Activated CD4-positive, alpha-beta T cell treated with anti-CD3 and anti-CD28 coated beads for 36 hours (primary cell): ENCODE measurements at regions of chr3 and their contacts with region 1.

Region 1: DNA sequence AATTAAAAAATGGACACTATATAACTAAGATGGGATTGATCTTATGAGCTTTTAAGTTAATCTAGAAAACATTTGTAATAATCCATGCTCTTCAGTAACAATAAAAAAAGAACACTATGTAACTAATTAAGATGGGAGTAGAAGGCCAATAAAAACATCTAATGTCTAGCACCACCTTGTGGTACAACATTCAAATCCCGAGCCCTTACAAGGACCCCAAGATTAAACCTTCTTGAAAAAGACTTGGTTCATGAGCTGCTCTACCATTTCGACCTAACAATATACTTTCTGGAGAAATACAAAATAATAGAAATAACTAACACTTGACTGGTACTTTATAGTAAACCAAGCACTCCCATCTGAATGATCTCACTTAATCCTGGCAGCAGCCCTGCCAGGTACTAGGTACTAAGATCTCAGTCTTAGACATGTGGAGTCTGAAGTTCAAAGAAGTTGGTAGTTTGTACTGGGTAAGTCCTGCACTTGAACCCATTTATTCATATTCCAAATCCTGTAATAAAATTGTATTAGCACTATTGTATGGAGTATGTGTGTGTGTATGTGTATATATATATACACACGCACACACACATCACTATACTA is 21.8 kb downstream of the METTL6 start:
- DNase-seq: no peak
- ATAC-seq: peak; percentile 72
- H3K4me3 Mint-ChIP-seq: no peak overlapping the region
- H3K27ac Mint-ChIP-seq: no peak overlapping the region
- H3K4me1 Mint-ChIP-seq: no peaks in the 10 kb centered on the region
- H3K27me3 Mint-ChIP-seq: no peaks in the 10 kb centered on the region

Region 2: GRCh38 chr3:14791343-14791945 is 614.1 kb before region 1 on chr3:
- CTCF ChIA-PET with region 1: no interaction called
- POLR2A ChIA-PET with region 1: no interaction called
- intact Hi-C with region 1: no loop called
- DNase-seq: peak; percentile 78
- ATAC-seq: peak; percentile 78
- H3K4me3 Mint-ChIP-seq: no peak overlapping the region
- H3K27ac Mint-ChIP-seq: no peak overlapping the region
- H3K4me1 Mint-ChIP-seq: no peaks in the 10 kb centered on the region
- H3K27me3 Mint-ChIP-seq: peaks cover 8% of the 10 kb centered on the region

Region 3: GRCh38 chr3:14969671-14970070 is 435.9 kb before region 1 on chr3:
- CTCF ChIA-PET with region 1: no interaction called
- POLR2A ChIA-PET with region 1: no interaction called
- intact Hi-C with region 1: no loop called
- DNase-seq: no peak
- ATAC-seq: no peak
- H3K4me3 Mint-ChIP-seq: no peak overlapping the region
- H3K27ac Mint-ChIP-seq: no peak overlapping the region
- H3K4me1 Mint-ChIP-seq: peaks cover 3% of the 10 kb centered on the region
- H3K27me3 Mint-ChIP-seq: no peaks in the 10 kb centered on the region

Region 4: GRCh38 chr3:15108082-15108545 is 297.4 kb before region 1 on chr3:
- CTCF ChIA-PET with region 1: interaction called, 5 read pairs
- POLR2A ChIA-PET with region 1: no interaction called
- intact Hi-C with region 1: loop called in 1 of 2 experiments (anchors 5 kb)
- DNase-seq: peak; percentile 86
- ATAC-seq: peak; percentile 96
- H3K4me3 Mint-ChIP-seq: no peak overlapping the region
- H3K27ac Mint-ChIP-seq: no peak overlapping the region
- H3K4me1 Mint-ChIP-seq: no peaks in the 10 kb centered on the region
- H3K27me3 Mint-ChIP-seq: peaks cover 3% of the 10 kb centered on the region

Region 5: DNA sequence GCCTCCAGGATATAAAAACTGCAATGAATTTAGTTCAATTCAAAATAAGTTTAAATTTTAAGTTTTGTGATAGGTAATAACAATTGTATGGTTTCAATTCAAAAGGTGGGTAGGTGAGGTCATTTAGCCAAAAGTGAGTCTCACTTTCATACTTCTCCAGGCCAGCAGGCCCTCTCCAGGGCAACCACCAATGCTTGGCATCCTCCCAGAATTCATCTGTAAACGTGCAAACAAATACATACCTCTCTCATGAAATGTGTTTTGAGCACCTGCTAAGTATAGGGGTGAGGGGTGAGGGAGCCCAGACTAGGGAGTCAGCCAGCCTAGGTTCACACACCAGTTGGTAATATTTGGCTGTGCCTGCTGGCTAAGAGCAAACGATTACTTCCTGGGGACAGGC is 284.6 kb before region 1 on chr3:
- CTCF ChIA-PET with region 1: interaction called, 10 read pairs
- POLR2A ChIA-PET with region 1: no interaction called
- intact Hi-C with region 1: no loop called
- DNase-seq: no peak
- ATAC-seq: no peak
- H3K4me3 Mint-ChIP-seq: no peak overlapping the region
- H3K27ac Mint-ChIP-seq: no peak overlapping the region
- H3K4me1 Mint-ChIP-seq: peaks cover 5% of the 10 kb centered on the region
- H3K27me3 Mint-ChIP-seq: no peaks in the 10 kb centered on the region

Region 6: GRCh38 chr3:15241341-15241740 is 164.2 kb before region 1 on chr3:
- CTCF ChIA-PET with region 1: interaction called, 6 read pairs
- POLR2A ChIA-PET with region 1: no interaction called
- intact Hi-C with region 1: loop called (anchors 1 kb)
- DNase-seq: peak; percentile 70
- ATAC-seq: peak; percentile 57
- H3K4me3 Mint-ChIP-seq: no peak overlapping the region
- H3K27ac Mint-ChIP-seq: no peak overlapping the region
- H3K4me1 Mint-ChIP-seq: peaks cover 4% of the 10 kb centered on the region
- H3K27me3 Mint-ChIP-seq: no peaks in the 10 kb centered on the region

Region 7: DNA sequence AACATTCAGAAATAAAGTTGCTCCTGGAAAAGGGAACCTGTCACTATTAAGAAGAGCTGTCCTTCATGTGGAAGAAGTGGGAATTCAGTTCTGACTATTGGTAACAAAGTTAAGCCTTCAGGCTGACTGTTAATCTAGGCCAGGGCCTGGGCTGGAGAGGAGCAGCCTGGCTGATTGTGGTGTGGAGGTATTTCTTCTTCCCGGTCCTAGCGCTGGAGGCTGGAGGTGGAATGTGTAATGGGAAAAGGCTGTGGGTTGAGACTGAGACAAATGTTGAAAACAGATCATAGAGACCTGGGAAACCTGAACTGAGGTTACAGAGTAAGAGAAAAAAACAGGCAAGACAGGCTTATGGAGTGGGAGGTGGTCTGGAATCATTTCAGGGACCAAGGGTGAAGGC is 49.4 kb before region 1 on chr3:
- CTCF ChIA-PET with region 1: no interaction called
- POLR2A ChIA-PET with region 1: no interaction called
- intact Hi-C with region 1: no loop called
- DNase-seq: no peak
- ATAC-seq: no peak
- H3K4me3 Mint-ChIP-seq: no peak overlapping the region
- H3K27ac Mint-ChIP-seq: peak overlapping the region; percentile 67
- H3K4me1 Mint-ChIP-seq: peaks cover 34% of the 10 kb centered on the region
- H3K27me3 Mint-ChIP-seq: no peaks in the 10 kb centered on the region

Region 8: DNA sequence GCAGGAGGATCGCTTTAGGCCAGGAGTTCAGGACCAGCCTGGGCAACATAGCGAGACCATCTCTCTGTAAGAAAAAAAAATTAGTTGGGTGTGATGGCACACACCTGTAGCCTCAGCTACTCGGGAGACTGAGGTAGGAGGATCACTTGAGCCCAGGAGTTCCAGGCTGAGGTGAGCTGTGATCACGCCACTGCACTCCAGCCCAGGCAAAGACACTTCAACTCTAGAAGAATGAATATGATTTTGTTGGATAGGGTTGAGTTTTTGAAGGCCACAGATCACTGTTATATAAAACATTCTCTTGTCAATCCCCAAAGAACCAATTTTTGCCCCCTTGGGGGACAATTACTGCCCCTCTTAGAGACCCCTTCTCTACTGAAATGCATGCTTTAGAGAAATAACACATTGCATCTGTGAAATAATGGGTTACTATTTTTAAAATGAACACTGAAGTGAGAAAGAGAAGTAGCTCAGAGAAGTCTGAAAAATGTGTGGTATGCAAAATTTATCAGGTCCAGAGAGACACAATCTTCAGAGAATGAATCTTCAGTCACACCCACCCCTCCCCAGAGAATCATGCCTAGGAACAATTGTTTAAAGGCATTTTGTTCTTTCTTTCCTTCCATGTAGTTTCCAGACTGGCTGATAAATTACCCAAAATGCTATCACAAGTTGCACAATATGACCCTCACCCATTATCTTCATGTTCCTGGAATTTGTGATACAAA is 20.9 kb before region 1 on chr3:
- CTCF ChIA-PET with region 1: interaction called, 15 read pairs
- POLR2A ChIA-PET with region 1: no interaction called
- intact Hi-C with region 1: no loop called
- DNase-seq: no peak
- ATAC-seq: no peak
- H3K4me3 Mint-ChIP-seq: no peak overlapping the region
- H3K27ac Mint-ChIP-seq: no peak overlapping the region
- H3K4me1 Mint-ChIP-seq: no peaks in the 10 kb centered on the region
- H3K27me3 Mint-ChIP-seq: no peaks in the 10 kb centered on the region

Region 9: GRCh38 chr3:15557511-15557946 is 152.0 kb after region 1 on chr3:
- CTCF ChIA-PET with region 1: interaction called, 4 read pairs
- POLR2A ChIA-PET with region 1: no interaction called
- intact Hi-C with region 1: loop called in 1 of 2 experiments (anchors 1 kb)
- DNase-seq: peak; percentile 75
- ATAC-seq: peak; percentile 87
- H3K4me3 Mint-ChIP-seq: no peak overlapping the region
- H3K27ac Mint-ChIP-seq: no peak overlapping the region
- H3K4me1 Mint-ChIP-seq: peaks cover 10% of the 10 kb centered on the region
- H3K27me3 Mint-ChIP-seq: no peaks in the 10 kb centered on the region